ENCODE measurements at regions of chr3 and their contacts with region 1.

Region 1: GRCh38 chr3:157159762-157160657 is at the start of gene CCNL1:
- DNase-seq: peak; percentile 96
- ATAC-seq: peak; percentile 80
- H3K4me3 Mint-ChIP-seq: peak within 1 kb of the TSS; percentile 88
- H3K27ac Mint-ChIP-seq: peak within 1 kb of the TSS; percentile 93
- H3K4me1 Mint-ChIP-seq: peaks cover 53% of the 10 kb centered on the region
- H3K27me3 Mint-ChIP-seq: no peaks in the 10 kb centered on the region
- total RNA-seq, gene CCNL1: 257 TPM

Region 2: GRCh38 chr3:156554842-156555687 is 604.9 kb before region 1 on chr3 and contains the start of gene SSR3:
- CTCF ChIA-PET with region 1: no interaction called
- POLR2A ChIA-PET with region 1: interaction called, 13 read pairs
- DNase-seq: peak; percentile 99
- ATAC-seq: peak; percentile 100
- H3K4me3 Mint-ChIP-seq: peak within 1 kb of the TSS; percentile 97
- H3K27ac Mint-ChIP-seq: peak within 1 kb of the TSS; percentile 93
- H3K4me1 Mint-ChIP-seq: peaks cover 49% of the 10 kb centered on the region
- H3K27me3 Mint-ChIP-seq: no peaks in the 10 kb centered on the region
- total RNA-seq, gene SSR3: 133 to 147 TPM

Region 3: GRCh38 chr3:157081681-157082210 is 78.3 kb before region 1 on chr3:
- CTCF ChIA-PET with region 1: no interaction called
- POLR2A ChIA-PET with region 1: interaction called, 34 read pairs
- DNase-seq: peak; percentile 87
- ATAC-seq: peak; percentile 95
- H3K4me3 Mint-ChIP-seq: no peak overlapping the region
- H3K27ac Mint-ChIP-seq: peak overlapping the region; percentile 53
- H3K4me1 Mint-ChIP-seq: peaks cover 28% of the 10 kb centered on the region
- H3K27me3 Mint-ChIP-seq: no peaks in the 10 kb centered on the region

Region 4: GRCh38 chr3:157130467-157131251 is 29.4 kb before region 1 on chr3:
- CTCF ChIA-PET with region 1: no interaction called
- POLR2A ChIA-PET with region 1: interaction called, 37 read pairs
- DNase-seq: peak; percentile 78
- ATAC-seq: peak; percentile 41
- H3K4me3 Mint-ChIP-seq: peak overlapping the region; percentile 50
- H3K27ac Mint-ChIP-seq: peak overlapping the region; percentile 92
- H3K4me1 Mint-ChIP-seq: peaks cover 89% of the 10 kb centered on the region
- H3K27me3 Mint-ChIP-seq: no peaks in the 10 kb centered on the region

Region 5: DNA sequence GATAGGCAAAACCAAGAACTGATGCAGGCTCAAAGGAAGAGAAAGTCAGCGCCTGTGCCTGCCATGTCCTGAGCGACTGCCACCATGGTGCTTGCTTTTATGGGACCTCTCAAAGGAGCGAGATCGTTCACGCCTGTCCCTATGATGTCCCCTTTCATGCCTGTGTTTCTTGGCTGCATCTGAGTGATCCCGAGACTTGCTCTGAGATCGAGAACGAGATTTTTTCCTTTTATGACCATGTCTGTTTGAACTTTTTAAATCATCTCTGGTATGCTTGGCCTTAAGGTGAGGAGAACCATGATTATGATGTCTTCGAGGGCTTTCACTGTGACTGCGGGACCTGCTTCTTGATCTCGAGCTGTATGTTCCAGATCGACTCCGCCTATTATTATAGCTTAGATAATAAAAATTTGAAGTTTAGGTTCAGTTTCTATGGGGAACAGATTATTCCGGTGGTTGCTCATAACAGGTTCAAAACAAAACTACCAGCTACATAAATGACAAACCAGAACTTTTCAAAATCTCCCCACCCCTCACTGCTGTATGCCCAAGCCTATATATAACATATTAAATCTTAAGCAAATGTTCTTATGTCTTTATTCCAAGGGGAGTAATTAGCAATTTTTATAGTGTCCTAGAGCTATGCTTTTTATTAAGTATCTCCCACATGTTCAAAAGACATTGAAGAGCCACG is 11.7 kb before region 1 on chr3:
- CTCF ChIA-PET with region 1: interaction called, 3 read pairs
- POLR2A ChIA-PET with region 1: interaction called, 44 read pairs
- DNase-seq: no peak
- ATAC-seq: no peak
- H3K4me3 Mint-ChIP-seq: no peak overlapping the region
- H3K27ac Mint-ChIP-seq: no peak overlapping the region
- H3K4me1 Mint-ChIP-seq: peaks cover 41% of the 10 kb centered on the region
- H3K27me3 Mint-ChIP-seq: no peaks in the 10 kb centered on the region

Region 6: DNA sequence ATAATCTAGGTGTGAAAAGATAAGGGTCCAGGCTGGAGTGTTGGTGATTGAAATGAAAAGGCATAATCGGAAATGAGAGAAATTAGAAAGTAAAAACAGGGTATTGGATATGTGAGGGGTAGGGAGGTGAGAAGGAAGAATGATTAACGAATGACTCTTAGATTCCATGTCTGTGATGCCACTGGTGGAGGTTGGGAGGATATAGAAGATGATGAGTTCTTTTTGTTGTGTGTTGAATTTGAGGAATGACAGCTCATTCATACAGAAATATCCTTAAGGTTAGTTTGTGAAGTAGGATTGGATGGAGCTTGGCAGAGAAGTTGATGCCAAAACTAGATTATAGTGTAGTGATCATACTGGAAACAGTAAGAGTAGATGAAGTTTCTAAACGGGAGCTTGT is 72.1 kb after region 1 on chr3:
- CTCF ChIA-PET with region 1: interaction called, 9 read pairs
- POLR2A ChIA-PET with region 1: interaction called, 13 read pairs
- DNase-seq: no peak
- ATAC-seq: no peak
- H3K4me3 Mint-ChIP-seq: no peak overlapping the region
- H3K27ac Mint-ChIP-seq: no peak overlapping the region
- H3K4me1 Mint-ChIP-seq: no peaks in the 10 kb centered on the region
- H3K27me3 Mint-ChIP-seq: no peaks in the 10 kb centered on the region

Measured in activated CD8-positive, alpha-beta T cell treated with anti-CD3 and anti-CD28 coated beads, Interleukin-2, amount 10 ng/mL, durations not matched to agents 7 days and 5 days (primary cell).